CD8-positive, alpha-beta memory T cell (primary cell): ENCODE measurements at regions of chr7 and their contacts with region 1.

Region 1: DNA sequence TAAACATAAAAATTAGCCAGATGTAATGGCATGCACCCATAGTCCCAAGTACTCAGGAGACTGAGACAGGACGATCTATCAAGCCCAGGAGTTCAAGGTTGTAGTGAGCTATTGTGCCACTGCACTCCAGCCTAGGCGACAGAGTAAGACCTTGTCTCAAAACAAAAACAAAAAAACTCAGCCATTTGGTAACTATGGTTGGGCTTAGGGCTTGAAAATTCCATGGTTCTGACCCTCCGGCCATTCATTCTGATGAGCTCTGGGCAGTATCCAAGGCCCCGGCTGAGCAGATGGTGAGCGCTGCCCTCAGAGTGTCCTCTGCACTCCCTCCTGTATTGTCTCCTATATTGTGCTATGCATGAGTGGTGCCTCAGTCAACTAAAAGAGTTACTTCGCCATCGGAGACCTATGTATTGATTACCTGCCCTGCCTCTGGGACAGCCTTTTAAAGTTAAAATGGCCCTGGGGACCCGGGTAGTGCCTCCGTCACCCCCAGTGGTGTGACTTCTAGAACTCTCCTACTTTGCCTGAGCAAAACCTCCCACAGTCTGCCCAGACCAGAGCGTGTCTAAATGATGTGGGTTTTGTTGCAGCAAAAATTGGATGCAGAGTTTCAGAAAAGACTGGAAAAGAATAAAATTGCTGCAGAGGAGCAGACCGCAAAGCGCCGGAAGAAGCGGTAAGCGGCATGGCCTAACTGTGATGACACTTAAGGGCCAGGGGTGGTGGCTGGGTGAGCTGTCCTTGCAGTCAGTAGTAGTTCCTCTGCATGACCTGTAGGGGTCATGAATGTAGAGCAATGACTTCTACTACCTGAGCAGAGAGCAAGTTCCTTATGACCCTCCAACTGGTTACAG is 8.1 kb downstream of the PRKRIP1 start:
- DNase-seq: peak; percentile 32 to 70 (median 67)
- H3K4me3 ChIP-seq: no peak overlapping the region
- H3K4me3 Mint-ChIP-seq: peak overlapping the region in 1 of 7 donors; percentile 47
- H3K27ac ChIP-seq: no peak overlapping the region
- H3K27ac Mint-ChIP-seq: peak overlapping the region in 6 of 8 donors; percentile 35 to 98 (median 60)
- H3K4me1 ChIP-seq: peaks cover 10% of the 10 kb centered on the region
- H3K4me1 Mint-ChIP-seq: peaks cover 6 to 11% (median 9%) of the 10 kb centered on the region in 3 donors
- H3K27me3 ChIP-seq: no peaks in the 10 kb centered on the region
- H3K27me3 Mint-ChIP-seq: no peaks in the 10 kb centered on the region

Region 2: DNA sequence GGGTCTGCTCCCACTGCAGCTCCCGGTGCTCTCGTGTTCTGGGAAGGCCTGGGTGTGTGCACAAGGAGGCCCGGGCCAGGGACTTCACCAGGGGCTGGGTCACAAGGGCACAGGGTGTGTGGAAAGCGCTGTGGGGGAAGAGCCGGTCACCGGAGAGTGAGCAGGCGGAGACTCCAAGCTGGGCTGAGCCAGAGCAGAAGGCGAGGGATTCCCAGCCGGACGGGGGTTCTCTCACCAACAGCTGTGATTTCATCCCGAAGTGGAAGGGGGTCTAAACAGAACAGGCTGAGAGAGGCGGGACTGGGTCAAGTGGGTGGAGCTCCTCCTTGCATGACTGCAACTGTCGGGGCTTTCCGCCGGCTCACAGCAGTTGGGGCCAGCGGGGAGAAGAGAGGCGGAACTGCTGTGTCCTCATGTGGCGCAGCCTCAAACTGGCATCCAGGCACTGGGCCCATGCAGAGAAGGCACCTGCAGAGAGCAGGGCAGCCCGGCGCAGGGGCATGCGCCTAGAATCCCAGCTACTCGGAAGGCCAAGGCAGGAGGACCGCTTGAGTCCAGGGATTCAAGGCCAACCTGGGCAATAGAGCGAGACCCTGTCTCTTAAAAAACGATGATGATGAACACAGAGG is 21.5 kb after region 1 on chr7:
- CTCF ChIA-PET with region 1: interaction called, 14 read pairs
- POLR2A ChIA-PET with region 1: interaction called, 5 read pairs
- DNase-seq: peak; percentile 80 to 91 (median 81)
- H3K4me3 ChIP-seq: peak overlapping the region; percentile 62
- H3K4me3 Mint-ChIP-seq: peak overlapping the region; percentile 77 to 95 (median 90)
- H3K27ac ChIP-seq: peak overlapping the region; percentile 96
- H3K27ac Mint-ChIP-seq: peak overlapping the region; percentile 98 to 100 (median 100)
- H3K4me1 ChIP-seq: peaks cover 84% of the 10 kb centered on the region
- H3K4me1 Mint-ChIP-seq: peaks cover 57 to 81% (median 66%) of the 10 kb centered on the region in 3 donors
- H3K27me3 ChIP-seq: no peaks in the 10 kb centered on the region
- H3K27me3 Mint-ChIP-seq: peaks cover 0 to 2% of the 10 kb centered on the region in 2 donors

Region 3: DNA sequence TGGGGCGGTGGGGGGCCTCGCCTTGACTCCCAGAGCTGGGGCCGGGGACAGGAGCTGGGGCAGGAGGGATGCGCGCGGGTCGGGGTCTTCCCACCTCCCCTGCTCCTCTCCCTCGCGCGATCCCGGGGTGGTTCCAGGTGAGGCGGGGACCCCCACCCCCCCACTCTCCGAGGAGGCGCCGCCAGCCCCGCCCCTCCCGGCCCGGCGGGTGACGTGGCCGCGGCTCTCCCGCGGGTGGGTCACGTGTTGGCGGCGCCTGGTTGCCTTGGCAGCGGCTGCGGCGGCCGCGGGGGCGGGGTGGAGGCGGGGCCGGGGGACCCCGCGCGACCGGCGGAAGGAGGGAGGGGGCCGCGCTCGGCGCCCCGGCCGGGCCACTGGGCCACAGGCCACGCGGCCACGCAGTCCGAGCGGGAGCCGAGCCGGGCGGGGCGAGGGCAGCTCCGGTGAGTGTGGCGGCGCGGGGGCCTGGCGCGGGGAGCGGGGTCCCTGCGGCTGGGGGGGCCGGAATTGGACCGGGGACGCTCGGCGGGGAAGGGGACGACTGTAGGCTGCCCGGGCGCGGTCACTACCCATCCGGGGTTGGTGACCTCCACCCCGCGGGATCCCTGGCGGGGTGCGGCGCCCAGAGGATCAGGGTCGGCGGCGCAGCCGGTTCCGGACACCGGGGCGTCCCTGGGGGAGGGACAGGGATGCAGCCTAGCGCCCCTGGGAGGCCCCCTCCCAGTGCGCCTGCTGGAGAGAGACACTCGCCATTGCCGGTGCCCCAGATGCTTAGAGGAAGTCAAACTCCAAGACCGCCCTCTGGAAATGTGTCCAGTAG is 29.2 kb after region 1 on chr7 and contains the start of gene ORAI2:
- CTCF ChIA-PET with region 1: interaction called, 11 read pairs
- POLR2A ChIA-PET with region 1: interaction called, 4 read pairs
- DNase-seq: peak; percentile 85 to 93 (median 85)
- H3K4me3 ChIP-seq: peak within 1 kb of the TSS; percentile 70
- H3K4me3 Mint-ChIP-seq: peak within 1 kb of the TSS; percentile 84 to 93 (median 87)
- H3K27ac ChIP-seq: peak within 1 kb of the TSS; percentile 79
- H3K27ac Mint-ChIP-seq: peak within 1 kb of the TSS; percentile 97 to 100 (median 99)
- H3K4me1 ChIP-seq: peaks cover 57% of the 10 kb centered on the region
- H3K4me1 Mint-ChIP-seq: peaks cover 39 to 62% (median 48%) of the 10 kb centered on the region in 3 donors
- H3K27me3 ChIP-seq: no peaks in the 10 kb centered on the region
- H3K27me3 Mint-ChIP-seq: peaks cover 0 to 2% of the 10 kb centered on the region in 2 donors
- total RNA-seq, gene ORAI2: 66.9 to 68.9 TPM

Region 4: GRCh38 chr7:102450242-102450641 is 46.0 kb after region 1 on chr7:
- CTCF ChIA-PET with region 1: interaction called, 29 read pairs
- POLR2A ChIA-PET with region 1: no interaction called
- DNase-seq: peak; percentile 25 to 72 (median 36)
- H3K4me3 ChIP-seq: no peak overlapping the region
- H3K4me3 Mint-ChIP-seq: no peak overlapping the region
- H3K27ac ChIP-seq: no peak overlapping the region
- H3K27ac Mint-ChIP-seq: peak overlapping the region in 2 of 8 donors; percentile 37 to 61
- H3K4me1 ChIP-seq: no peaks in the 10 kb centered on the region
- H3K4me1 Mint-ChIP-seq: peaks cover 0 to 4% (median 0%) of the 10 kb centered on the region in 3 donors
- H3K27me3 ChIP-seq: no peaks in the 10 kb centered on the region
- H3K27me3 Mint-ChIP-seq: no peaks in the 10 kb centered on the region

Region 5: DNA sequence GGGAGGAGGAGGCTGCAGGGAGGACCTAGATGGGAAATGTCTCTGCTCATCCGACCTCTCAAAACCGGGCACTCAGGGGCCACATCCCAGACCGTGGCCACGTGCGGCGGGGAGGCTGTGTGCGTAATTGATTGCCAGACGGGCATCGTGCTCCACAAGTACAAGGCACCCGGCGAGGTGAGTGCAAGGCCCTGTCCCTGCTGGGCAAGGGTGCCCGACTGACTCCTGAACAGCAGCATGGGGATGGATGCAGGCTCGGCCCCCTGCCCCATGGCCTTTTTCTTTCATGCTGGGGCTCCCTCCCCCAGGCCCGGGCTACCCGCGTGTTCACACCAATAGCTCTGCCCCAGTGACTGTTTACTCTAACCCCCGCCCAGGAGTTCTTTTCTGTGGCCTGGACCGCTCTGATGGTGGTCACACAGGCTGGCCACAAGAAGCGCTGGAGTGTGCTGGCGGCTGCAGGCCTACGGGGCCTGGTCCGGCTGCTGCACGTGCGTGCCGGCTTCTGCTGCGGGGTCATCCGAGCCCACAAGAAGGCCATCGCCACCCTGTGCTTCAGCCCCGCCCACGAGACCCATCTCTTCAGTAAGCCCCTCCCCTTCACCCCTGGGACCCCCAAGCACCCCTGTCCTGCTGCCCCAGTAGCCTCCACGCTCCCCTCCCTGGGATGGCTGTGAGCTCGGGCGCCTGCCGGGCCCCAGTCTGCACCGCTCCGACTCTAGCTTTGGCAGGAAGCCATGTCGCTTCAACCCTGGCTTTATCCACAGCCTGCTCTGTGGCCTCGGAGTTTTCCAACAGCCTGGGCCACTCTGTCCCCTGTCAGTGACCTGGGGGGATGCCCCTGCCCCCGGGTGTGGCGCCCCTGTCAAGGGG is 64.5 kb after region 1 on chr7:
- CTCF ChIA-PET with region 1: interaction called, 19 read pairs
- POLR2A ChIA-PET with region 1: no interaction called
- DNase-seq: peak in 1 of 5 donors; percentile 47
- H3K4me3 ChIP-seq: no peak overlapping the region
- H3K4me3 Mint-ChIP-seq: peak overlapping the region in 1 of 7 donors; percentile 36
- H3K27ac ChIP-seq: no peak overlapping the region
- H3K27ac Mint-ChIP-seq: peak overlapping the region in 2 of 8 donors; percentile 20 to 38
- H3K4me1 ChIP-seq: peaks cover 17% of the 10 kb centered on the region
- H3K4me1 Mint-ChIP-seq: peaks cover 23 to 29% (median 27%) of the 10 kb centered on the region in 3 donors
- H3K27me3 ChIP-seq: no peaks in the 10 kb centered on the region
- H3K27me3 Mint-ChIP-seq: peaks cover 0 to 1% of the 10 kb centered on the region in 2 donors